ENCODE measurements at regions of chr1 and their contacts with region 1.

Region 1: DNA sequence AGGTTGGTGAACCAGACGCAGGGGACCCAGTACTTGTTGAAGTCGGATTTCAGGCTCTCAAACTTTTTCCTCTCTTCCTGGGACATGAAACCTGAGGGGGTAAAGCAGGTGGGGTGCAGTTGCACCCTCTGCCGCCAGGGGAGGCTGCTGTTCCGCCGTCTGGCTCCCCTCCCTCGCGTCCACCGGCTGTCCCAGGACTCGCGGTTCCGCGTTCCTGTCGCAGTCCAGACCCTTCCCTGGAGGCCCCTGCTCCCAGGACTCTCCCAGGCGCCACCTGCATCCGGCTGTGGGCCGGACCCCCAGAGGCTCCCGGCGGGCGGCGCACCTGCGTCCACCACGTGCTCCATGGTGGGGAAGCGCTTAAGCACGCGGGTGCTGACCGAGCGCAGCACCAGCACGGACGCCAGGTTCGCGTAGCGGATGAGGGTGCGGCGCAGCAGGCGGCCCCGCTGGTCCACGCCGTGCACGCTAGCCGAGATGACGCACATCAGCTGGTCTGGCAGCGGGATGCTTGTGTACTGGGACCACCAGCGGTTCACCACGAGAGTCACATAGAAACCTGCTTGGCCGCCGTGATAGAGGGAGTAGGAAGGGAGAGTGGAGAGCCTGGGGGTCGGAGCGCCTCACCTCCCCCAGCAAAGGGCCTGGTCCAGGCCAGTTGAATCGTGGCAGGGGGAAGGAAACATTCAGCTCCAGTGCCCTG is 1.7 kb downstream of the BEST4 start:
- DNase-seq: peak; percentile 81
- ATAC-seq: peak; percentile 67
- H3K4me3 Mint-ChIP-seq: peak overlapping the region; percentile 57
- H3K27ac Mint-ChIP-seq: peak overlapping the region; percentile 78
- H3K4me1 Mint-ChIP-seq: peaks cover 44% of the 10 kb centered on the region
- H3K27me3 Mint-ChIP-seq: no peaks in the 10 kb centered on the region

Region 2: DNA sequence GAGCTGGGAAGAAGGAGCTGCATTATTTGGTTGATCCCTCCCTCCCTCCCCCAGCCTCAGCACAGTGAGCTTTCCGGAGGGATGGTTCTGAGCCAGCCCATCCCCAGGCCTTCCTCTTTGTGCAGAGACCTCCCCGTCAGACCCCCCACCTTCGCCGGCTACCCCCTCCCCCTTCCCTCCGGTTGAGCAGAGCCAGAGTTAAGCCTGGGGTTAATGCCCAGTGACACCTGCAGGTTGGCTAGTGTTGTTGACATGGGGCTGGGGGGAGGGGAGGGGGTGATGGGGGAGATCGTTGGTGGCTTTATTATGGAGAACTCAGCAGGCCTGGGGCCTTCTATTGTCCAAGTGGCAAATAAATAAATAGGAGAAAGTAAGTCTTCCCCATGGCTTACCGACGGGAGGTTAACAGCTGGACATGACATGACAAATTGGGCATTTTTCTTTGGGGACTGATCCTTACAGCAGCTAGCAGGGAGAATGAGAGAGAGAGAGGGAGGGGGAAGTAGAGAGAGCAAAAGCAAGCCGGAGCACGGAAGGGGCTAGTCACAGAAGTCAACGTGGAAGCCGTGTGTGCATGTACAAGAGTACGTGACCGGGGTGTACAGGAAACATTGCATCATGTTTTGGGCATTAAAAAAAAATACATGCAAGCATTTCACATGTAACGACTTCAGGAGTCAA is 243.1 kb before region 1 on chr1:
- CTCF ChIA-PET with region 1: no interaction called
- DNase-seq: no peak
- ATAC-seq: no peak
- H3K4me3 Mint-ChIP-seq: no peak overlapping the region
- H3K27ac Mint-ChIP-seq: no peak overlapping the region
- H3K4me1 Mint-ChIP-seq: no peaks in the 10 kb centered on the region
- H3K27me3 Mint-ChIP-seq: peaks cover 51% of the 10 kb centered on the region

Region 3: DNA sequence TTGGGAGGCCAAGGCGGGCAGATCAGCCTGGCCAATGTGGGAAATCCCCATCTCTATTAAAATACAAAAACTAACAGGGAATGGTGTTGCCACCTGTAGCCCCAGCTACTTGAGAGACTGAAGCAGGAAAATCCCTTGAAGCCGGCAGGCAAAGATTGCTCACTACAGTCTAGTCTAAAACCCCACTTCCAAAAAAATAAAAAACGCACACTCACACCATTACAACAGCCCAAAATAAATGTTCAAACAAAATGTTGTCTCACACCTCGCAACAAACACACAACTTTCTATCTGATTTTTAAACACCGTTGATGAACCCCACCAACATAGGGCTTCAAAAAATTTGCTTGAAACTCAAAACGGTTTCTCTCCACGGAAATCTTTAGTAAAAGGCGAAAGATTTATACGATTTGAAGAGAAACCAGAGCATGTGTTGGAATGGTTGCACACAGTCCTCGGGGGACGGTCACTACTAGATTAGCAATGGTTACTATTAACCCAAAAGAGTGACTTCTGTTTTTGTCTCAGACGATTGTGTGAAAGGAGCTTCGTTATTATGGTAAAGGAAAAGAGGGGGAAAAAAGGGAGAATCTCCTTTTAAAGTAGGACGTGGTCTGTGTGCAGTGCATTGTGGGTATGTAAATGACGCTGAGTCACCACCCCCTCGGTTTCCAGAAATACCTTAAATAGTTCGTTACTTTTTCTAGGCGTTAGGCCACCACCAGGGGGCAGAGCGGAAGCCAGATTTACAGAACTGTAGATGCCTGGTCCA is 55.4 kb before region 1 on chr1 and contains the start of gene RNU5D-1:
- CTCF ChIA-PET with region 1: interaction called, 60 read pairs
- DNase-seq: peak; percentile 97
- ATAC-seq: peak; percentile 84
- H3K4me3 Mint-ChIP-seq: peak within 1 kb of the TSS; percentile 62
- H3K27ac Mint-ChIP-seq: peak within 1 kb of the TSS; percentile 98
- H3K4me1 Mint-ChIP-seq: peaks cover 33% of the 10 kb centered on the region
- H3K27me3 Mint-ChIP-seq: no peaks in the 10 kb centered on the region
- total RNA-seq, gene RNU5D-1: not detected

Region 4: DNA sequence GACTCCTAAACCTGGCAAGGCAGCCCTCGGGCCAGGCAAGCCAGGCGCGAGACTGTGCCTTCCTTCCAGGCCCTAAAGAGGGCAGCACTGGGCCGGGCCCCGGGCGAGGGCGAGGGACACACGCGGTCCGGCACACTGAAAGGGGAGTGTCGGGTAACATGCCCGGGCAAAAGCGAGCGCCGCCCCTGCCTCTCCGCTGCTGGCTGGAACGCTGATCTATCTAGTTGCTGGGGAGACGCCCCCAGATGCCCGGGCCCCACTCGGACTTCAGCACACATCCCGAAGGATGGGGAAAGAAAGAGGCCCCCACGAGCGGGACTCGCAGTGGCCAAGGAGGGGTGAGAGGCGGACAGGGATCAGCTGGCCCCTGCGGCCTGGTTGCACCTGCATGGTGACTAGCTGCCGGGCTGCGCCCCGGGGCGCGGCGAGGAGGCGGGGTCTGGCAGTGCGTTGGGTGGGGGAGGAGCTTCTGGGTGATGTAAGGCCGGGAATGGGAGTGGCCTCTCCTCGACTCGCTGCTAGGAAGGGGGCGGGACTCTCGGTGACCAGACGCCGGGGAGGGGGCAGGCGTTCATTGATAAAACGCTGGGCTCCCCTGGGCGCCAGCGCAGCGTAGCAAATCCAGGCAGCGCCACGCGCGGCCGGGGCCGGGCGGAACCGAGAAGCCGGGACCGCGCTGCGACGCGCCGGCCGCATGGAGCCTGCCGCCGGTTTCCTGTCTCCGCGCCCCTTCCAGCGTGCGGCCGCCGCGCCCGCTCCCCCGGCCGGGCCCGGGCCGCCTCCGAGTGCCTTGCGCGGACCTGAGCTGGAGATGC is 13.7 kb after region 1 on chr1 and contains the start of gene PLK3:
- CTCF ChIA-PET with region 1: interaction called, 36 read pairs
- DNase-seq: peak; percentile 99
- ATAC-seq: peak; percentile 81
- H3K4me3 Mint-ChIP-seq: peak within 1 kb of the TSS; percentile 78
- H3K27ac Mint-ChIP-seq: peak within 1 kb of the TSS; percentile 100
- H3K4me1 Mint-ChIP-seq: peaks cover 29% of the 10 kb centered on the region
- H3K27me3 Mint-ChIP-seq: no peaks in the 10 kb centered on the region
- total RNA-seq, gene PLK3: 43.1 to 48.9 TPM

Region 5: GRCh38 chr1:44812822-44813543 is 26.7 kb after region 1 on chr1:
- CTCF ChIA-PET with region 1: interaction called, 14 read pairs
- DNase-seq: no peak
- ATAC-seq: no peak
- H3K4me3 Mint-ChIP-seq: peak overlapping the region; percentile 90
- H3K27ac Mint-ChIP-seq: peak overlapping the region; percentile 22
- H3K4me1 Mint-ChIP-seq: peaks cover 56% of the 10 kb centered on the region
- H3K27me3 Mint-ChIP-seq: no peaks in the 10 kb centered on the region

Region 6: GRCh38 chr1:45011837-45012638 is 225.7 kb after region 1 on chr1 and contains the start of gene UROD:
- CTCF ChIA-PET with region 1: interaction called, 26 read pairs
- DNase-seq: peak; percentile 96
- ATAC-seq: peak; percentile 81
- H3K4me3 Mint-ChIP-seq: peak within 1 kb of the TSS; percentile 75
- H3K27ac Mint-ChIP-seq: peak within 1 kb of the TSS; percentile 93
- H3K4me1 Mint-ChIP-seq: peaks cover 35% of the 10 kb centered on the region
- H3K27me3 Mint-ChIP-seq: no peaks in the 10 kb centered on the region
- total RNA-seq, gene UROD: 68.5 to 72.7 TPM

Measured in activated CD8-positive, alpha-beta memory T cell treated with anti-CD3 and anti-CD28 coated beads, Interleukin-2, amount 10 ng/mL, durations not matched to agents 7 days and 5 days (primary cell).